Activated CD4-positive, alpha-beta T cell treated with anti-CD3 and anti-CD28 coated beads, Interleukin-2, amount 10 ng/mL, durations not matched to agents 7 days and 5 days (primary cell): ENCODE measurements at regions of chr10 and their contacts with region 1.

Region 1: DNA sequence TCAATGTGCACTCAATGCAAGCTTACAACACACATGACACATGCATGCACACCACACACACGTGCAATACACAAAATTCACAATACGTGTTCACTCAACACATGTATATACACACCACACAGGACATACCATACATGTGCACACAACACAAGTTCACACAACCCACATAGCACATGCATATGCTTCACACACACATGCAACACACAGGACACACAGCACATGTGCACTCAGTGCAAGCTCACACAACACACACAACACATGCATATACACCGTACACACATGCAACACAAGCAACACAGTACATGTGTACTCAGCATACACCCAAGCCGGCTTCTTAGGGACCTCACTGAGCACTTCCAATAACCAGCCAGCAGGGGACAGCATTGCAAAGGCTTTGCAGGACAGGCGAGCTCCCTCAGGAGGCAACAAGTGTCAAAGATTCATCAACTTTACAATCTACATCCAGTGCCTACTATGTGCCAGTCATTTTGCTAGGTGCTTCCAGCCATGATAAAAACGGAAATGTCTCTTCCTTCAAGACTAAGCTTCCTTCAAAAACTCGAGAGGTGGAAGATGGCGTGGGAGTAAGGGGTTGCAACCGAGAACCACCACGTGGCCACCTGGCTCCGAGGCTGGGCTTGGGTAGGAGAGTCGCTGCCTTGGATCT is 61.1 kb downstream of the JCAD start:
- DNase-seq: peak; percentile 83
- H3K4me3 Mint-ChIP-seq: no peak overlapping the region
- H3K27ac Mint-ChIP-seq: no peak overlapping the region
- H3K4me1 Mint-ChIP-seq: peaks cover 5% of the 10 kb centered on the region
- H3K27me3 Mint-ChIP-seq: peaks cover 37% of the 10 kb centered on the region

Region 2: DNA sequence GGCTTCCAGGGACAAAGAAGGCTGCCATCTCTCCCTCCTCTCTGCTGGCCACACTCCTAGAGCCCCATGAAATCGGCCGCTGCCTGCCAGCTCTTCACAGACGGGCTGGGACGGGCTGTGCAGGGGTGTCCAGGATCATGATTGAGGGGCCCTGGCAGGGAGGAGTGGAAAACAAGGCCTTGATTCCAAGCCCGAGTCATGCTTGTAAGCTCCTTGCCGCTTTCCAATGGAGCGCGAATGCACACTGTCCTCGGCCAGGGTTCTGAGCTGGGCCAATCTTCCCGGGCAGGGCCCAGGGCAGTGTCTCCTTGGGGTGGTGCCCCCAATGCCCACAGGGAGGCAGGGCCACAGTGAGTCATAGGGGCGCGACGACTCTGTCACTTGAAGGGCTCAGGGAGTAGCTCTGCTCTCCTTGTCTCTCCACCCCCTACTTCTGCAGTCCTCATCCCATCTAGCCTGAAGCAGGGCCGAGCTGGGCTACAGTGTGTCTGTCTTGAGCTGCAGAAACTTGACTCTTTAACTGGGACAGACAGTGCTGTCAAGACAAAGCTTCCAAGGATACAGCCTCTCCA is 177.3 kb before region 1 on chr10:
- CTCF ChIA-PET with region 1: no interaction called
- POLR2A ChIA-PET with region 1: no interaction called
- DNase-seq: no peak
- H3K4me3 Mint-ChIP-seq: no peak overlapping the region
- H3K27ac Mint-ChIP-seq: no peak overlapping the region
- H3K4me1 Mint-ChIP-seq: no peaks in the 10 kb centered on the region
- H3K27me3 Mint-ChIP-seq: peaks cover 3% of the 10 kb centered on the region

Region 3: DNA sequence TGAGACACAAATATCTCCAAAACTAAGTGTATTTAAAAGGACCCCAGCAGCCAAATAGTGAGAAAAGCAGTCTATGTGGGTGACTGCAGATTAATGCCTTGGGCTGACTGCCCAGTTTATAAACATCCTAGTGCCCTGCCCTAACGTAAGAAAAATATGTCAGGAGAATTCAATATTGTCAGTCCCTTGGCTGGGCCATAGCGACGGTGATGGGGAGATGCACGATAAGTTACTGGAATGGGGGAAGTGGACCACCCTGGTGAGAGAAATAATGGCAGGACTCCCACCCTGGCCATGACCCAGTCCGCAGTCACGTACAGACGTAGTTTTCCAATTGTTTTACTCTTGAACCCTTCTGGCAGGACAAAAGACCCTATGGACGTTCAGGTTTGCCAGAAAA is 13.1 kb after region 1 on chr10:
- CTCF ChIA-PET with region 1: interaction called, 12 read pairs
- POLR2A ChIA-PET with region 1: no interaction called
- DNase-seq: no peak
- H3K4me3 Mint-ChIP-seq: no peak overlapping the region
- H3K27ac Mint-ChIP-seq: no peak overlapping the region
- H3K4me1 Mint-ChIP-seq: no peaks in the 10 kb centered on the region
- H3K27me3 Mint-ChIP-seq: peaks cover 55% of the 10 kb centered on the region

Region 4: DNA sequence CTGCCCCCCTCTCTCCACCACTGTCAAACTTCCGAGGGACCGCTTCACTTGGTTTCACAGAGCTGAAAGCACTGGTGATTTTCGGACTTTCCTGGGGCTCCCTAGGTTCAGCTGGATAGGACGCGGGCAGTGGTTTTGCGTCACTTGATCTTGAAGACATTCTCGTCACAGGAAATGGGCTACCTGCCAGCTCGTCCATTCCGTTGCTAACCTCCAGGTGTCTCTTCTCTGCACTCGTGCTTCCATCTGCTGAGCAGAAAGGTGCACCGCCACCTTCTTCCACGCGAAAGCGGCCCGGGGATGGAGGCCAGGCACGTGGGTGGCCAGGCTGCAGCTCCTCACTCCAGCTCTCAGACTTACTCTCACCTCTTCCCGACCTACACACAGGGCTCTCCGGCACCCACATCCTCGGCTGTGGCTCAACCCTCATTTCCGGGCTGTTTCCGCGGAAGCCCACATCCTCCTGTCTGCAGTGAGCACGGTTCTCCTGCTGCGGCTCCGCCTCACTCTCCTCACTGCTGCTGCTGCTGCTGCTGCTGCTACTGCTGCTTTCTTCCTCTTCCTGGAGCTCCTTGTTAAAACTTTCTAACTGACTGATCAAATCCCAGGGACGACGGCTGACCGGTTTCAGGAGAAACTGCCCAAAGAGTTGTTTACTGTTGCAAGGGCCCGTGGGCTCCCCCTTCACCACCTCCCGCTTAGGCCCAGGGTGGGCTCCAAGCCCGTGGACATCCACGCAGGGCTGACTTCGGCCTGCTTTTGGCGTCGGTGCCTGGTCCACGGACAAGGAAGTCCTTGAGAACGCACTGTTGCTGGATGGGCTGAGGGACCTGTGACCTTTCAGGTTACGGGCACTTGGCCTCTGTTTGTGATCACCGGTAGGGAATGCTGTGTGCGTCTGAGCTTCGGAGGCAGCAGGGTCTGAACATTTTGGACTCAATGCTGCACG is 29.1 kb after region 1 on chr10:
- CTCF ChIA-PET with region 1: interaction called, 11 read pairs
- POLR2A ChIA-PET with region 1: no interaction called
- DNase-seq: peak; percentile 92
- H3K4me3 Mint-ChIP-seq: peak overlapping the region; percentile 64
- H3K27ac Mint-ChIP-seq: peak overlapping the region; percentile 80
- H3K4me1 Mint-ChIP-seq: peaks cover 39% of the 10 kb centered on the region
- H3K27me3 Mint-ChIP-seq: peaks cover 66% of the 10 kb centered on the region

Region 5: GRCh38 chr10:30241422-30242110 is 243.3 kb after region 1 on chr10:
- CTCF ChIA-PET with region 1: interaction called, 14 read pairs
- POLR2A ChIA-PET with region 1: no interaction called
- DNase-seq: no peak
- H3K4me3 Mint-ChIP-seq: no peak overlapping the region
- H3K27ac Mint-ChIP-seq: no peak overlapping the region
- H3K4me1 Mint-ChIP-seq: no peaks in the 10 kb centered on the region
- H3K27me3 Mint-ChIP-seq: peaks cover 12% of the 10 kb centered on the region